Panc1 (cell line): ENCODE measurements at regions of chr19 and their contacts with region 1.

Region 1: DNA sequence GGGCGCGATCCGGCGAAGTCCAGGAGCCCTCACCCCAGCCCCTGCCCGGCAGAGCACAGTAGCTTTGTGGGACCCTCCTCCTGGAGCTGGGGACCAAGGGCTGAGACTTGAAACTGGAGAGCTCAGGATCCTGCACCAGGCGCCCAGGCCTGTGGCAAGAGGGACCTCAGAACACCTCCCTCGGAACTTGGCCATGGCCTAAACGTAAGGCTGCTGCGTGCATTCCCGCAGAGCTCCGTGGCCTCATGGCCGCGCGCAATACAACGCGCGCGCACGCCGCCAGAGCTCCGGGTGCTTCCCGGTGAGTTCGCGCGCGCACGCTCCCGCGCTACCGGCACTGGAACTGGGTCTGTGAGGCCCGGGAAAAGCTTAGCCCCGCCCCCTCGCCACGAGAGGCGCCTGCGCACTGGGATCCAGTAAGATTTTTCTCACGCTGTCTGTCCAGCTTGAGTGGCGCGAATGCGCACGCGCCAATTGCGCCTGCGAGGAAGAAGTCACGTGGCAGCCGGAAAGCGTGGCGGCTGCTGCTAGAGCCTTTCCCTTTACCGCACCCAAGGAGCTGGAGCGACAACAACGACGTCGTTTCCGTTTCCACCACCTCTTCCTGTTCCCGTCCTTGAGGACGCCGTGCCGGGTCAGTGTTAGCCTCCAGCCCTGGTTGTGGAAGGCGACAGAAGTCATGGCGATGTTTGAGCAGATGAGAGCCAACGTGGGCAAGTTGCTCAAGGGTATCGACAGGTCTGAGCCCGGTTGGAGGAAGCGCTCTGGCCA is at the start of gene EIF3K:
- DNase-seq: peak; percentile 100
- ATAC-seq: peak; percentile 94
- H3K4me3 ChIP-seq: peak within 1 kb of the TSS; percentile 47 to 85
- H3K27ac ChIP-seq: peak within 1 kb of the TSS; percentile 96
- H3K4me1 ChIP-seq: peaks cover 16% of the 10 kb centered on the region
- H3K27me3 ChIP-seq: no peaks in the 10 kb centered on the region
- CTCF ChIP-seq: no peak
- total RNA-seq, gene EIF3K: 2,011 TPM

Region 2: DNA sequence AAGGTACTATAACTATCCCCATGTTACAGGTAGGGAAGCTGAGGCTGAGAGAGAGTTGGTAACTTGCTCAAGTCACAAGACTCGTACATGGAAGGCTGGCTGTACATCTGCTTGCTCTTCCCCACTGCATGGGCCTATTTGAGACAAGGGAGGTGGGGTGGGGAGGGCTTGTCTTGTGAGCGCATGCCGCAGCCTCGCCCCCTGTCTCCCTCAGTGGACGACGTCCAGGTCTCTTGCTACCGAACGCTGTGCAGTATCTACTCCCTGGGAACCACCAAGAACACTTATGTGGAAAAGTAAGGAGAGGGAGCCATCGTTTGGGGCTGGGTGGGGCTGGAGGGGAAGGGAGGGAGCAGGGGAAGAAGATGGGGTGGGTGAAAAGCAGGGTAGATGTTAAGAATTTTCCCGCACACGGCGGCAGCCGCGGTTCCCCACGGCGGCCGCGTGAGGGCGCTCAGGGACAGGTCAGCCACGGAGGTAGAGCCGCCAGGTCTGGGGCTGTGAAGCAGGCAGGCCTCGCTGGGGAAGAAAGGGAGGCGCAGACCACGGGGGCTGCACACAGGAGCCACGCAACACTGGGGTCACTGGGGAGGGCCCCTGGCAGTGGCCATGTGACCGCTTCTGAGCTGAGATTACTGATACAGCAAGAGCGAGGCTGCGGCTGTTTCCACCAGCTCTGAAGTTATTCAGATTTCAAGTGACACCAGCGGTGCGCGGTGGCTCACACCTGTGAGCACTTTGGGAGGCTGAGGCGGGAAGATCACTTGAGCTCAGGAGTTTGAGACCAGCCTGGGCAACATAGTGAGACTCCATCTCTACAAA is 103.8 kb before region 1 on chr19:
- CTCF ChIA-PET with region 1: interaction called, 7 read pairs
- POLR2A ChIA-PET with region 1: no interaction called
- in situ Hi-C with region 1: no loop called
- intact Hi-C with region 1: loop called (anchors 5 kb)
- DNase-seq: peak; percentile 85
- ATAC-seq: peak; percentile 91
- H3K4me3 ChIP-seq: peak overlapping the region in 1 of 2 experiments; percentile 14; a peak in 2 of 4 replicates
- H3K27ac ChIP-seq: 0 out of 2 replicates have a peak overlapping the region, but pooled peaks have one; percentile 2
- H3K4me1 ChIP-seq: peaks cover 4% of the 10 kb centered on the region; the same call in 1 of the 2 replicates
- H3K27me3 ChIP-seq: no peaks in the 10 kb centered on the region
- CTCF ChIP-seq: no peak

Region 3: GRCh38 chr19:38544034-38544958 is 74.5 kb before region 1 on chr19:
- CTCF ChIA-PET with region 1: interaction called, 8 read pairs
- POLR2A ChIA-PET with region 1: interaction called, 3 read pairs
- in situ Hi-C with region 1: loop called (anchors 5 kb)
- intact Hi-C with region 1: loop called (anchors 5 kb)
- DNase-seq: peak; percentile 95
- ATAC-seq: peak; percentile 93
- H3K4me3 ChIP-seq: peak overlapping the region; percentile 25 to 50
- H3K27ac ChIP-seq: peak overlapping the region; percentile 32
- H3K4me1 ChIP-seq: peaks cover 15% of the 10 kb centered on the region
- H3K27me3 ChIP-seq: peaks cover 3% of the 10 kb centered on the region; the same call in 1 of the 2 replicates
- CTCF ChIP-seq: no peak

Region 4: DNA sequence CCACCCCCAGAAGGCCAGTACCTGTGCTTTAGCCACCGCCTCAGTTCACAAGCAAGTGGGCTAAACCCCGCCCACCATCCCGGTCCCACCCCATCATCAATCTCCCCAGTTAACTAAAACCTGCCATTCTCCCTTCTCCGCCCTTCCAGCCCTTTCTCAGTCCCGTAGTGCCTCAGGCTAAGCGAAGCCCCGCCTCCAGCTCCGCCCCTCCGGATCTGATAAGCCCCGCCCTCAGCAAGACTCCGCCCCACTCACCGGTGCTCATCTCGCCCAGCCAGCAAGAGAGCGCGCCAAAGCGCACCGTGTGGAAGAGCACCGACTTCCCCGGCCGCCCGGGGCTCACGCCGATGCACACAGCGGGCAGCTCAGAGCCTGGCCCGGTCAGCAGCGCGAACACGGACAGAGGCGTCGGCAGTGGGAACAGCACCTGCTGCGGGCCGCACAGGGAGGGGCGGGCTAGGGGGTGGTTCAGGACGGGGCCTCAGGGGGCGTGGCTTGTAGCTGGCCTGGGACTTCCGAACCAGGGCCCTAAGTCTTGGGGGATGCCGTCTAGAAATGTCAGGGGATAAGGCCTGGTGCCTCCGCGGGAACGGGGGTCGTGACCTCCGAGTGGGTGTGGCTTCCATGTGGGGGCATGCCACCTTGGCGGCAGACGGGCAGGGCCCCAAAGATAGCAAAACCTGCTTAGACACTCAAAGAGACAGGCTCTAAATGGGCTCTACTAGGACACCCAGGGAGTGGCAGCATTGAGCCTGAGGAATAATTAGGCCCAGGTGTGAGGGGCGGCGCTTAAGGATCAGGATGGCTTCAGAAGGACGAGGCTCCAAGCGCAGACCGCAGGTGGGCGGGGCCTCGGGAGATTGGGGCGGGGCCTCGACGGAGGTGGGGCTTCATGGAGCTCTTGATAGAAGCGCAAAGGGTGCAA is 22.5 kb before region 1 on chr19:
- CTCF ChIA-PET with region 1: interaction called, 8 read pairs
- POLR2A ChIA-PET with region 1: interaction called, 10 read pairs
- in situ Hi-C with region 1: no loop called
- intact Hi-C with region 1: no loop called
- DNase-seq: peak; percentile 76
- ATAC-seq: peak; percentile 89
- H3K4me3 ChIP-seq: peak overlapping the region; percentile 32 to 50
- H3K27ac ChIP-seq: no peak overlapping the region
- H3K4me1 ChIP-seq: no peaks in the 10 kb centered on the region
- H3K27me3 ChIP-seq: no peaks in the 10 kb centered on the region
- CTCF ChIP-seq: no peak

Region 5: DNA sequence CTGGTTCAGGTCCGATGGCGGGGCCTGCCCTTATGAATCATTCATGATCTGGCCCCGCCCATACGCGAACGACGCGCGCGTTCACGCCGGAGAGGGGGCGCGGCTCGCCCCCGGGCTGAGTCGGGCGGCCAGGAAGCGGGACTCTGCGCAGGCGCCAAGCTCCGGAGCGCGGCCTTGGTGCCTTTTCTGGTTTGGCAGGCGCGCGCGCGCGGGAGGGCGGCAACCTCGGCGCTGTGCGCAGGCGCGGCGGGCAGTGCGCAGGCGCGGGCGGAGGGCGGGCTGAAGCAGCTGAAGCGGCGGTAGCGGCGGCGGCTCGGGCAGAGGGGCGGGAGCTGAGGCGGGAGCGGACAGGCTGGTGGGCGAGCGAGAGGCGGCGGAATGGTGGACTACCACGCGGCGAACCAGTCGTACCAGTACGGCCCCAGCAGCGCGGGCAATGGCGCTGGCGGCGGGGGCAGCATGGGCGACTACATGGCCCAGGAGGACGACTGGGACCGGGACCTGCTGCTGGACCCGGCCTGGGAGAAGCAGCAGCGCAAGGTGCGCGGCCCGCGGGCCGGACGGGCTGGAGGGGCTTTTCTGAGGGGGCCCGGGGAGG is 28.7 kb after region 1 on chr19 and contains the start of gene ACTN4:
- CTCF ChIA-PET with region 1: interaction called, 8 read pairs
- POLR2A ChIA-PET with region 1: interaction called, 12 read pairs
- in situ Hi-C with region 1: no loop called
- intact Hi-C with region 1: no loop called
- DNase-seq: peak; percentile 100
- ATAC-seq: peak; percentile 83
- H3K4me3 ChIP-seq: peak within 1 kb of the TSS; percentile 50 to 68
- H3K27ac ChIP-seq: peak within 1 kb of the TSS; percentile 96
- H3K4me1 ChIP-seq: peaks cover 16% of the 10 kb centered on the region
- H3K27me3 ChIP-seq: no peaks in the 10 kb centered on the region
- CTCF ChIP-seq: no peak
- total RNA-seq, gene ACTN4: 3,297 TPM

Region 6: GRCh38 chr19:38989066-38989605 is 370.4 kb after region 1 on chr19:
- CTCF ChIA-PET with region 1: no interaction called
- POLR2A ChIA-PET with region 1: no interaction called
- in situ Hi-C with region 1: no loop called
- intact Hi-C with region 1: no loop called
- DNase-seq: no peak
- ATAC-seq: peak; percentile 80
- H3K4me3 ChIP-seq: no peak overlapping the region
- H3K27ac ChIP-seq: peak overlapping the region; percentile 2
- H3K4me1 ChIP-seq: peaks cover 14% of the 10 kb centered on the region
- H3K27me3 ChIP-seq: no peaks in the 10 kb centered on the region
- CTCF ChIP-seq: no peak

Region 7: DNA sequence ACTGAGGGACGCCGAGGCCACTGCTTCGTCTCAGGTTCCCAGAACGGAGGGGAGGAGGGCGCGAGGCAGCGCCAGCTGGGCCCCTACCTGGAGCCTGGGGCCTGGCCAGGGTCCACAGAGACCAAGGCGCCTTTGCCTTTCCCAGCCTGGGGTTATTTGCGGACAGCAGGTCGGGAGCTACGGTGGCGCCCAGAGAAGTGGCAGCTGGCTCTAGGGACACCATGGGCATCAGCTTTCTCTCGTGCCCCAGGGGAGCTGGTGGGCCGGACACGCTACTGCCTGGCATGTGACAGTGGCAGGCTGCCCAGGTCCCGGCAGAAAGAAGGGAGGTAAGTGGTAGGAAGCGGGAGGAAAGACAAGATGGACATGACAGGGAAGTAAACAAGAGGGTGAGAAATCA is 1647.3 kb after region 1 on chr19:
- CTCF ChIA-PET with region 1: interaction called, 11 read pairs
- POLR2A ChIA-PET with region 1: no interaction called
- in situ Hi-C with region 1: no loop called
- intact Hi-C with region 1: no loop called
- DNase-seq: no peak
- ATAC-seq: no peak
- H3K4me3 ChIP-seq: no peak overlapping the region
- H3K27ac ChIP-seq: no peak overlapping the region
- H3K4me1 ChIP-seq: no peaks in the 10 kb centered on the region
- H3K27me3 ChIP-seq: no peaks in the 10 kb centered on the region
- CTCF ChIP-seq: no peak